CD14-positive monocyte (primary cell): ENCODE measurements at regions of chr7 and their contacts with region 1.

Region 1: GRCh38 chr7:88268863-88269262 is 37.8 kb downstream of the STEAP4 start:
- DNase-seq: peak; percentile 75 to 92 (median 87)
- H3K4me3 ChIP-seq: peak overlapping the region in 1 of 3 experiments; percentile 36
- H3K4me3 Mint-ChIP-seq: peak overlapping the region in 1 of 2 donors; percentile 43
- H3K27ac ChIP-seq: peak overlapping the region in 1 of 2 donors; percentile 58
- H3K27ac Mint-ChIP-seq: peak overlapping the region; percentile 52 to 92 (median 89)
- H3K4me1 ChIP-seq: peaks cover 37 to 48% of the 10 kb centered on the region in 2 donors
- H3K4me1 Mint-ChIP-seq: peaks cover 52% of the 10 kb centered on the region
- H3K27me3 ChIP-seq: no peaks in the 10 kb centered on the region
- H3K27me3 Mint-ChIP-seq: peaks cover 0 to 2% (median 0%) of the 10 kb centered on the region in 3 donors
- CTCF ChIP-seq: no peak

Region 2: DNA sequence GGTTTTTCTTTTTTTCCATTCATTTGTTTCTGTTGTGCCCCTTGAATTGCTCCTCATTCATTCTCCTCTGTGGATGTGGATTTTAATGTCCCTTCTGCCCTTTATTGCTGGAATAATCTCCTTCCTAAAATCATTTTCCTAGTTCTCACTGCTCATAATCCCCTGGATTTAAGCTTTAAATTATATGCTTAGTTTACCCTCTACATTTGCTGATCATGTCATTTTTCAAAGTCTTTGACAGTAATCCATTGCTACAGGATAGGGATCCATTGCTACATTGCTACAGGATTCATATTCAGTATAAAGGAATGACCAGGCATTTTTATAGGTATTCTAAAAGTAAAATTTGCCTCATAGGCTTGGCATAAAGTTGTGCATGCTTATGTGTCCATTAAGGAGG is 320.5 kb before region 1 on chr7:
- intact Hi-C with region 1: no loop called
- DNase-seq: no peak
- H3K4me3 ChIP-seq: no peak overlapping the region
- H3K4me3 Mint-ChIP-seq: no peak overlapping the region
- H3K27ac ChIP-seq: no peak overlapping the region
- H3K27ac Mint-ChIP-seq: no peak overlapping the region
- H3K4me1 ChIP-seq: no peaks in the 10 kb centered on the region
- H3K4me1 Mint-ChIP-seq: no peaks in the 10 kb centered on the region
- H3K27me3 ChIP-seq: no peaks in the 10 kb centered on the region
- H3K27me3 Mint-ChIP-seq: peaks cover 0 to 1% (median 0%) of the 10 kb centered on the region in 3 donors
- CTCF ChIP-seq: no peak

Region 3: DNA sequence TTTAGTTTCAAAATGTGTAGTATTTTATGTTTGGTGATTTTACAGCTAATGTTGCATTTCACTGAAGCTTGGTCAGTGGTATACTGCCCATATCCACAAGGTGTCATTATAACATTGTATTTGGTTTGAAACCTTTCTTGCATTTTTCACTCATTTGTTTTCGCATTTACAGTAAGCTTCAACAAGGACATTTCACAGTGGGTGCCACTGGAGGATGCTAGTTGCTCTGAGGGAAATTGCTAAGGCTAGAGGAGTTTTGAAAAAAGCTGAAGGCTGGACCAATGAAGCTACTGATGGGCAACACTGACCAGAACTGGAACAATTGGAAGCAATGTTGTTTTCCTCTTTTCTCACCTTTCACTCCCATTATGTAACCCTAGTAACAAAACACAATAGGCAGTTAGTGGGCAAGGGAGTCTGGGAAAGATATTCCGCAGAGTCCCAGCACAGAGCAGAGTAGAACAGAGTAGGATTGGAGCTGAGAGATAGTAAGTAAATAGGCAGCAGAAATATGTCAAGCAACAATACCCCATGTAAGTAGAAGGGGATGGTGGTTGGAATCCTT is 25.4 kb before region 1 on chr7:
- intact Hi-C with region 1: no loop called
- DNase-seq: peak in 2 of 3 donors; percentile 54 to 64
- H3K4me3 ChIP-seq: no peak overlapping the region
- H3K4me3 Mint-ChIP-seq: no peak overlapping the region
- H3K27ac ChIP-seq: no peak overlapping the region
- H3K27ac Mint-ChIP-seq: peak overlapping the region in 4 of 7 donors; percentile 29 to 78 (median 63)
- H3K4me1 ChIP-seq: peaks cover 4 to 6% of the 10 kb centered on the region in 2 donors
- H3K4me1 Mint-ChIP-seq: peaks cover 6% of the 10 kb centered on the region
- H3K27me3 ChIP-seq: no peaks in the 10 kb centered on the region
- H3K27me3 Mint-ChIP-seq: peaks cover 0 to 4% (median 2%) of the 10 kb centered on the region in 3 donors
- CTCF ChIP-seq: peak; percentile 86

Region 4: GRCh38 chr7:88312061-88312663 is 43.3 kb after region 1 on chr7:
- intact Hi-C with region 1: loop called in 1 of 2 experiments (anchors 10 kb)
- DNase-seq: no peak
- H3K4me3 ChIP-seq: no peak overlapping the region
- H3K4me3 Mint-ChIP-seq: no peak overlapping the region
- H3K27ac ChIP-seq: no peak overlapping the region
- H3K27ac Mint-ChIP-seq: peak overlapping the region in 4 of 7 donors; percentile 36 to 81 (median 60)
- H3K4me1 ChIP-seq: peaks cover 58 to 69% of the 10 kb centered on the region in 2 donors
- H3K4me1 Mint-ChIP-seq: peaks cover 59% of the 10 kb centered on the region
- H3K27me3 ChIP-seq: no peaks in the 10 kb centered on the region
- H3K27me3 Mint-ChIP-seq: peaks cover 0 to 5% (median 3%) of the 10 kb centered on the region in 3 donors
- CTCF ChIP-seq: no peak